ENCODE measurements at regions of chr4 and their contacts with region 1.

Region 1: DNA sequence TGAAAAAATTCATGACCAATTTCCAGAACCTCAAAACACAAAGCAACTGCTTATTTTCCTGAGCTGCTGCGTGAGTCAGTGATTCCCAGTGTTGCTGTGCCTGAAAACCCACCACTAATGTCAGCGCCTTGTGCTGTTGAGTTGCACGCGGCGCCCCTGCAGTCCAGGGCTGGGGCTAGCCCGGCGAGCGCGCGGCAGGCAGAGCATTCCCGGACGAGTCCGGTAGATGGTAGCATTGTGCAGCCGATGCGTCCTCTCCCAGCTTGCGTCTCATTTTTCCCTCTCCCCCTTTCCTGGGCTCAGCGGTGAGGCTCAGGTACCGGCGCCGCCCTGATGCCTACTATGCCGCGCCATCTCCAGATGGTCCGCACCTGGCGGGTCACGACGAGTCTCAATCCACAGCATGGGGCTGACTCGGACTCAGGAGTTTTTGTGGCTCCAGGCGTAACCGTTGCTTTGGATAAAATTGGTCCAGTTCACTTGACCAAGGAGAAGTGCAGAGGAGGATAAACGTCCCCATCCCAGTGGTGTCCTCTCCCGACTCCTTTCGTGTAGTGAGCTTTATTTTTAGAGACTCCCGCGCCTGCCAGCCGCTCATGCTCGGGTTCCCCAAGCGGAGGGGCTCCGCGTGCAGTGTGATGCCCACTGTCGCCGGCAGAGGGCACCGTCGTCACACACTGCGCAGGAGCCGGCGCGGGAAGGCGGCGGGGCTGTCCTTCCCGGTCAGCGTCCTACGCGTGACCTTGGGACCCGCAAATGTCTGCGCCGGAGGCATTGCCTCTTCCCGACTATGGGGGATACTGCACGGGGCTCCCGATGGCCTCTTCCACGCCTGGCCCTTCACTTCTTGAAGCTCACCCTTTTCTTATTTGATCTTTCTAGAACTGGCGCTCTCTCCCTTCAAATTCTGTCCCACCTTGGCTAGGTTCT is 53.6 kb upstream of the IGFBP7 start:
- DNase-seq: no peak
- H3K4me3 ChIP-seq: peak overlapping the region; percentile 51
- H3K27me3 ChIP-seq: peaks cover 8% of the 10 kb centered on the region
- CTCF ChIP-seq: peak; percentile 97

Region 2: GRCh38 chr4:56961107-56961500 is 202.7 kb before region 1 on chr4:
- CTCF ChIA-PET with region 1: no interaction called
- POLR2A ChIA-PET with region 1: no interaction called
- DNase-seq: no peak
- H3K4me3 ChIP-seq: no peak overlapping the region
- H3K27me3 ChIP-seq: no peaks in the 10 kb centered on the region
- CTCF ChIP-seq: no peak

Region 3: GRCh38 chr4:57102050-57102624 is 61.7 kb before region 1 on chr4:
- CTCF ChIA-PET with region 1: interaction called, 11 read pairs
- POLR2A ChIA-PET with region 1: interaction called, 3 read pairs
- DNase-seq: peak; percentile 74
- H3K4me3 ChIP-seq: no peak overlapping the region
- H3K27me3 ChIP-seq: no peaks in the 10 kb centered on the region
- CTCF ChIP-seq: no peak

Region 4: GRCh38 chr4:57147335-57148060 is 16.3 kb before region 1 on chr4:
- CTCF ChIA-PET with region 1: interaction called, 21 read pairs
- POLR2A ChIA-PET with region 1: no interaction called
- DNase-seq: peak; percentile 24
- H3K4me3 ChIP-seq: no peak overlapping the region
- H3K27me3 ChIP-seq: no peaks in the 10 kb centered on the region
- CTCF ChIP-seq: no peak

Region 5: GRCh38 chr4:57303012-57303751 is 139.4 kb after region 1 on chr4:
- CTCF ChIA-PET with region 1: interaction called, 14 read pairs
- POLR2A ChIA-PET with region 1: no interaction called
- DNase-seq: no peak
- H3K4me3 ChIP-seq: no peak overlapping the region
- H3K27me3 ChIP-seq: no peaks in the 10 kb centered on the region; the same call in 1 of the 2 replicates
- CTCF ChIP-seq: no peak

Region 6: GRCh38 chr4:57426779-57427395 is 263.1 kb after region 1 on chr4:
- CTCF ChIA-PET with region 1: interaction called, 33 read pairs
- POLR2A ChIA-PET with region 1: no interaction called
- DNase-seq: no peak
- H3K4me3 ChIP-seq: no peak overlapping the region
- H3K27me3 ChIP-seq: peaks cover 4% of the 10 kb centered on the region; the same call in 1 of the 2 replicates
- CTCF ChIP-seq: peak; percentile 79

Region 7: DNA sequence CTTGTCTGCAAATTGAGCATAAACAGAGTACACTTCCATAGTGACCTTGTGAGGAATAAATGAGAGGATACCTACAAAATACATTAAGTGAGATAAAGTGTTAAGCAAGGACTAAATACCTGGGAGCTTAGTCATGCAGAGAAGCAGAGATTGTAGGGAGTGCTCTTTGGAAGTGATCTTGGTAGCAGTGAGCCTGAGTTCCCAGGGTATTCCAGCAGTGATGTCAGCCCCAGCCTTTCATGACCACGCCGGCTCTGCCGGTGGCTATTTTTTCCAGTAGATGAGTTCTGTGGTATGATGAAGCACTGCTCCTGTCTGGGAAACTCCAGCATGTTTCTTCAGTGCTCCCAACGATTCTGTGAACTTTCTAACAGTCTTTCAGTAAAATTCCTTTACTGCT is 337.9 kb after region 1 on chr4:
- CTCF ChIA-PET with region 1: no interaction called
- POLR2A ChIA-PET with region 1: no interaction called
- DNase-seq: no peak
- H3K4me3 ChIP-seq: no peak overlapping the region
- H3K27me3 ChIP-seq: no peaks in the 10 kb centered on the region; the same call in 1 of the 2 replicates
- CTCF ChIP-seq: no peak

Region 8: GRCh38 chr4:57633212-57633849 is 469.5 kb after region 1 on chr4:
- CTCF ChIA-PET with region 1: no interaction called
- POLR2A ChIA-PET with region 1: no interaction called
- DNase-seq: no peak
- H3K4me3 ChIP-seq: no peak overlapping the region
- H3K27me3 ChIP-seq: no peaks in the 10 kb centered on the region
- CTCF ChIP-seq: no peak